ENCODE measurements at regions of chr3 and their contacts with region 1.

Region 1: DNA sequence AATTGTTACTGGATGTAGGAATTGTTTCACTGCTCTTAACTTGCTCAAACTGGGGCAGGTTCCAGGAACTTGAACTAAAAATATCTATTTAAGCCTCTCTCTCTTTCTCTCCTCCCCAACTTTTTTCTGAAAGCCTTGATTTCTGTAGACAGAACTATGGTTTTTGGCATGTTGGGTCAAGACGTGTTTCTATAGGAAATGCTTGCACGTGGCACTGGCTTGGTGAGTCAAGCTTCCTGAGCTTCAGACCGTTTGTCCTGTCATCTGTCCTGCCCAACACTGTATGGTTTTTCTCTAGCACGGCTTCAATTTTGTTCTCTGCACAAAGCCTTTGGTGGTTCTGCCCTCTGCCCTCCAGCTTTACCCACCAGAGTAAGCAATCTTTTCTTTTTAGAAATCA is 13.5 kb downstream of the EAF1 start:
- DNase-seq: no peak
- ATAC-seq: no peak

Region 2: DNA sequence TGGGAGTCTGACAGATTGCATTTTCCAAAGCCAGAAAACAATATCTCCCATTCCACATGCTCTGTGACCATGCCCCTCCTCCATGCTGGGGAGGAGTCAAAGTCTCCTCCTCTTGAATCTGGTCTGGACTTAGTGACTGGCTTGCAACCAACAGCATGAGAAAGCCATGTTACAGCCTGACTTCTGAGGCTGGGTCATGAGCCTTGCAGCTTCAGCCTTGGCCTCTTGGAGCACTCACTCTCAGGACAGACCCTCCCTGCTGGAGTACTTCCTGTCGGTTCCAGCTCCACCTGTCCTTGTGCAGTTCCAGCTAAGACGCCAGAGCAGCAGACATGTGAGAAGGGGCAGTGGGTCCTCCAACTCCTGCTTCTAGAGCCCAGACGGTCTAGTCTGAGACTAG is 292.3 kb before region 1 on chr3:
- intact Hi-C with region 1: loop called (anchors 5 kb)
- DNase-seq: no peak
- ATAC-seq: no peak

Region 3: DNA sequence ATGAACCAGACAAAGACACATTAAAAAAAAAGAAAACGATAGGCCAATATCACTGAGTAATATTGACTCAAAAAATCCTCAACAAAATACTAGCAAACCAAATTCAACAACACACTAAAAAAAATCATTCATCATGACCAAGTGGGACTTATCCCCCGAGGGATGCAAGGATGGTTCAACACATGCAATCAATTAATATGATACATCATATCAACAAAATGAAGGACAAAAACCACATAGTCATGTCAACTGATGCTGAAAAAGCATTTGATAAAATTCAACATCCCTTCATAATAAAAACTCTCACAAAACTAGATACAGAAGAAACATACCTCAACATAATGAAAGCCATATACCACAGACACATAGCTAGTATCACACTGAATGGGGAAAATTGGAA is 398.7 kb after region 1 on chr3:
- intact Hi-C with region 1: no loop called
- DNase-seq: no peak
- ATAC-seq: no peak